RWPE1 (cell line): ENCODE measurements at regions of chr17 and their contacts with region 1.

Region 1: GRCh38 chr17:21457051-21458026 is 81.2 kb downstream of the KCNJ12 start:
- DNase-seq: peak; percentile 90
- H3K27ac ChIP-seq: peak overlapping the region; percentile 56
- CTCF ChIP-seq: peak; percentile 92

Region 2: GRCh38 chr17:21495281-21495680 is 37.9 kb after region 1 on chr17:
- CTCF ChIA-PET with region 1: no interaction called
- POLR2A ChIA-PET with region 1: no interaction called
- DNase-seq: no peak
- H3K27ac ChIP-seq: no peak overlapping the region
- CTCF ChIP-seq: no peak

Region 3: GRCh38 chr17:21511363-21512198 is 54.2 kb after region 1 on chr17:
- CTCF ChIA-PET with region 1: interaction called, 58 read pairs
- POLR2A ChIA-PET with region 1: no interaction called
- DNase-seq: peak; percentile 68
- H3K27ac ChIP-seq: no peak overlapping the region
- CTCF ChIP-seq: peak; percentile 78